Right ventricle myocardium inferior (tissue), 1 donor: ENCODE measurements at regions of chr22 and their contacts with region 1.

Region 1: DNA sequence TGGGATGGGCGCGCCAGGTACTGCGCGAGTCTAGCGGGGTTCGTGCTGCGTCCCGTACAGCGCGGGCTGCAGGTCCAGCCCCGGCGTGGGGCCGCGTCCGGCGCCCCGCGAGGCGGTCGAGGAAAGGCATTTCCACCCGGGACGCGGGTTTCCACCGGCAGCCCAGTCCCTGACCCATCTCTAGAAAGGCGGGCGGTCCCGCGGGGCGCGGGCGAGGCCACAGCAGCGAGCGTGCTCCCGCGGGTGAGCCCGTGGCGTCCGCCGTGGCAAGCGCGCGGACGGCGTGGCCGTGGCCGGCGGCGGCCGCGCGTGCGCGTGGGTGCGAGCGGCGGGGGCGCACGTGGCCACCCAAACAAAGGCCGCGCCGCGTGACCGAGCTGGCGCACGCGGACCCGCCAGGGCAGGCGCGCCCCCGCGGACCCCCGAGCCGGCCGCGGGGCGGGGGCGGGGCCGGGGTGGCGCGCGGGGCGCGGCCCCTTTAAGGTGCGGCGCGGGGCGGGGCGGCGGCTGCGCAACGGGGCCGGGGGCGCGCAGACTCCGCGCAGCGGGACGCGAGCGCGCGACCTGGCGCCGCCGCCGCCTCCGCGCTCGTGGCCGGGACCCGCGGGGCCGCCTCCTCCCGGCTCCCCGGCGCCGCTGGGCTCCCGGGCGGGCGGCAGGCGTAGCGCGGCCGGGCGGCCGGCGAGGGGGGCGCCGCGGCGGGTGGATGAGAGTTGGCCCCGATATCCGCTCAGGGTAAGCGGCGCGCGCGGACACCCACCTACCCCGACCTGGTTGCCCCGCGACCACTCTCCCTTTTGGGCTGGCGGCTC is 39.3 kb upstream of the CELSR1 start:
- DNase-seq: peak; percentile 85
- ATAC-seq: peak; percentile 29

Region 2: DNA sequence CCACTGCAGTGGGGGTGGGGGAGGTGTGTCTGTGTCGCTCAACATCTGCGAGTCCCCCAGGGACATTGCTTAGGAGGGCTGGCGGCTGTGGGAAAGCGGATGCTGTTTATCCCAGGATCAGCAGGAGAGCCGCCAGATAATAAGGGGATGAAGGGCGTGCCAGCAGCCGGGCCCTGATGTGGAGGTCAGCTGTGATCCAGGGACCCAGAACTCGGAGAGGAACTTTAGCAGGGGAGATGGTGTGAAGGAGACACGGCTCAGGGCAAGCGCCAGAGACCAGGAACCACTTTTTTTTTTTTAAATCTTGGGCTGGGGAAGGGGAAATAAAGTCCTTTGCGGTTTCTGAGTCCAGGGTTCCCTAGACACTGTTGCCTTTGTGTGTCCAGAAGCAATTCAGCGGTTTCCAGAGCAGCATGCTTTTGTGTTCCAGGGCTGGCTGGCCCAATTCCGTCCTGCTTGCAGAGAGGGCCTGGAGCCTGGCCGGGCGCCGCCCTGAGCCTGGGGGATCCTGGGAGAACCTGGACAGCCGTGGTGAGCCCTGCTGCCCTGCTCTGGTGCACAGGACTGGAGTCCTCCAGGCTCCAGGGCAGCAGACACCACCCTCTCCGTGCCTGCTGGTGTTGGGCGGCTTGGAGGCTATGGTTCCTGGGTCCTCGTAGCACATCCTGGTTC is 43.2 kb after region 1 on chr22 and contains the start of gene GRAMD4:
- intact Hi-C with region 1: loop called (anchors 5 kb)
- DNase-seq: peak; percentile 83
- ATAC-seq: peak; percentile 67
- total RNA-seq, gene GRAMD4: 80.0 TPM

Region 3: GRCh38 chr22:46649141-46650077 is 72.6 kb after region 1 on chr22:
- intact Hi-C with region 1: loop called (anchors 5 kb)
- DNase-seq: no peak
- ATAC-seq: peak; percentile 67